ENCODE measurements at regions of chr10 and their contacts with region 1.

Region 1: DNA sequence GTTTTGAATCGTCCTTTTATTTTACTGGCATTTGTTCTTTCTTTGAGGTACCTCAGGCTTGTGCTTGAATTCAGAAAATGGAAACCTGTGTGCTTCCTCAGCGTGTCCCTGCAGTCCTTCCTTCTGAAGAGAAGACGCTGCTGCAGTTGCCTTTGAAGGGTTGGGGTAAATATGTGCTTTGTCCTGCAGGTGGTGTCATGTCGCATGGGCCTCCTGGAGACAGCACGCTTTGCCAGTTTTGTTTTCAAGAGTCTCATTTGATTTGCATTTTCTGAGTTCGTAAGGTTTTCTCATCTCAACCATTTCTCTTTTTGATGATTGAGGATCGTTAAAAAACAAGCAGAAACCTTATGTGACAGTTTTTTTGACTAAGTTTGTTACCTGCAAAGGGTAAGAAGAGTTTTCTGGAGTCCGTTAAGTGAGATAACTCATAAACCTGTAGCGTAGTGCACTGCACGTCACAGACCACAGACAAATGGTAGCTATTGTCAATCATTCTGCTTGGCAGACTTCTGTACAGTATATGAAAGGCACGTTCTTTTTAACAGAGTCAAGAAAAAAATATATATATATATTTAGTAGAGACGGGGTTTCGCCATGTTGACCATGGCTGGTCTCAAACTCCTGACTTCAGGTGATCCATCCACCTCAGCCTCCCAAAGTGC is 57.0 kb downstream of the CDC123 start:
- DNase-seq: peak; percentile 86
- ATAC-seq: peak; percentile 99
- H3K4me3 ChIP-seq: peak overlapping the region in 2 of 5 experiments; percentile 23 to 53
- H3K4me3 Mint-ChIP-seq: peak overlapping the region; percentile 83
- H3K27ac ChIP-seq: peak overlapping the region; percentile 57
- H3K27ac Mint-ChIP-seq: peak overlapping the region; percentile 93
- H3K4me1 ChIP-seq: peaks cover 14% of the 10 kb centered on the region in 2 donors
- H3K4me1 Mint-ChIP-seq: peaks cover 17% of the 10 kb centered on the region
- H3K27me3 ChIP-seq: no peaks in the 10 kb centered on the region
- H3K27me3 Mint-ChIP-seq: no peaks in the 10 kb centered on the region
- CTCF ChIP-seq: peak; percentile 82

Region 2: GRCh38 chr10:12241810-12242529 is 11.0 kb before region 1 on chr10:
- CTCF ChIA-PET with region 1: interaction called, 6 read pairs
- POLR2A ChIA-PET with region 1: no interaction called
- intact Hi-C with region 1: loop called (anchors 1 kb)
- DNase-seq: peak; percentile 71
- ATAC-seq: no peak
- H3K4me3 ChIP-seq: no peak overlapping the region
- H3K4me3 Mint-ChIP-seq: peak overlapping the region; percentile 77
- H3K27ac ChIP-seq: peak overlapping the region; percentile 95
- H3K27ac Mint-ChIP-seq: peak overlapping the region; percentile 99
- H3K4me1 ChIP-seq: peaks cover 58 to 62% of the 10 kb centered on the region in 2 donors
- H3K4me1 Mint-ChIP-seq: peaks cover 60% of the 10 kb centered on the region
- H3K27me3 ChIP-seq: no peaks in the 10 kb centered on the region
- H3K27me3 Mint-ChIP-seq: no peaks in the 10 kb centered on the region
- CTCF ChIP-seq: no peak

Region 3: DNA sequence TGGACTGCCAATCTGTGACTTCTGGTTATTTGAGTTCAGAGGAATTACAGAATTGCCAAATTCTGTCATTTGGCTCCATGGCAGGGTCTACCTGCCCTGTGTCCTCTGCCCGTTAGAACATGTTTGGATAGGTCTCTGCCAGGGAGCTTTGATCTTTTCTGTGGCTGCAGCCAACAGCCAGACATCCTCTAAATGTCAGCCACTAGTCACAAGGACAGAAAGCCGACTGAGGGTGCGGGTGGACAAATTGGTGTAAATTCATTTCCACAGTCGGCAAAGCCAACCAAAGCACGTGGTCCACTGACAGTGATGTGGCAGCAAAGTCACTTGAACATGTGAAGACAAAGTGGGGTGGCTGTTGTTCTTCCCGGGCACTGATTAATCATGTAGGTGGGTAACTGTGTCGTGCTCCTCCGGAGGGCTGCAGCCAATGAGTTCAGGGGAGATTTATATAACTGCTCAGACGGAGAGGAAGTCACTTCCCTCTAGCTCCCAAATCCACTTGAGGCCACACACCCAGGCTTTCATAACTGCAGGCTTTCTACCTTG is 69.6 kb after region 1 on chr10:
- CTCF ChIA-PET with region 1: interaction called, 11 read pairs
- POLR2A ChIA-PET with region 1: no interaction called
- intact Hi-C with region 1: no loop called
- DNase-seq: no peak
- ATAC-seq: no peak
- H3K4me3 ChIP-seq: no peak overlapping the region
- H3K4me3 Mint-ChIP-seq: no peak overlapping the region
- H3K27ac ChIP-seq: no peak overlapping the region
- H3K27ac Mint-ChIP-seq: no peak overlapping the region
- H3K4me1 ChIP-seq: peaks cover 4 to 15% of the 10 kb centered on the region in 2 donors
- H3K4me1 Mint-ChIP-seq: peaks cover 29% of the 10 kb centered on the region
- H3K27me3 ChIP-seq: no peaks in the 10 kb centered on the region
- H3K27me3 Mint-ChIP-seq: no peaks in the 10 kb centered on the region
- CTCF ChIP-seq: no peak

Region 4: GRCh38 chr10:12337453-12338372 is 84.7 kb after region 1 on chr10:
- CTCF ChIA-PET with region 1: no interaction called
- POLR2A ChIA-PET with region 1: no interaction called
- intact Hi-C with region 1: no loop called
- DNase-seq: no peak
- ATAC-seq: no peak
- H3K4me3 ChIP-seq: no peak overlapping the region
- H3K4me3 Mint-ChIP-seq: no peak overlapping the region
- H3K27ac ChIP-seq: no peak overlapping the region
- H3K27ac Mint-ChIP-seq: peak overlapping the region; percentile 15
- H3K4me1 ChIP-seq: peaks cover 52% of the 10 kb centered on the region in 2 donors
- H3K4me1 Mint-ChIP-seq: peaks cover 61% of the 10 kb centered on the region
- H3K27me3 ChIP-seq: no peaks in the 10 kb centered on the region
- H3K27me3 Mint-ChIP-seq: no peaks in the 10 kb centered on the region
- CTCF ChIP-seq: no peak

Region 5: DNA sequence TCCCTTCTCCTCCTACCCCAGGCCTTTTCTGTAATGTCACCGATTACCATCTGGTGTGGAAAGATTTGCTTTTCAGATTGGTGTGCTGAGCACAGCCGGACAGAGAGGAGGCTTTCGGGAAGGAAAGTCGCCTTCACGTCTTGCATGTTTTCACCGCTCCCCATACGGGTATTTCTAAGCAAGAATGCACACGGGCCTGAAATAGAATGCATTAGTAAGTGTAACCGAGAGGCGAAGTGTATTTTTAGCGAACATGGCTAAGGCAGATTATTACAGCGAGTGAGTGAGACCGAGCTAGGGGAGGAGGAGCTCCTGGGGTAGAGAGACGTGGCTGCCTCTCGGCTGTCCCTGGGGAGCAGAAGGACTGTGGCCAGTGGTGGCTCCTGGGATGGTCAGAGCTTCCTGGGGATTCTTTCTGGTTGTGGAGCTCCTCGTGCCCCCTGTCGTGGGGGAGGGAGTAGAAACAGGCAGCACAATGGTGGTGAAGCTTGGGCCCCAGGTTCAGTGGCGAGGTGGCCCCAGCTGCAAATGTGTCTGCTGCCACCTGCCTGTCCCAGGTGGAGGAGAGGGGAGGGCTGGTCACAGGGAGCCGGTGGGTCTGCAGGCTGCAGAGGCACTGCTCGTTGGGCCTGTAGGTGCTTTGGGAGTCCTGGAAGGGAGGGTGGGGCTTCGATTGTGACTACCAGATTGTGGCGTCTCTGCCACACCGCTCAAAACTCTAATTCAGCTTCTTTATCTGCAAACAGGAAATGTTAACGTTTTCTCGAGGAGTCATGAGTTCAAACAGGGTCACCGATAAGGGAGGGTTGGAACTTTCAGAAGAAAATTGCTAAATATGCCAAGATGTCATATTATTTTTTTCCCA is 232.2 kb after region 1 on chr10:
- CTCF ChIA-PET with region 1: interaction called, 9 read pairs
- POLR2A ChIA-PET with region 1: no interaction called
- intact Hi-C with region 1: loop called (anchors 1 kb)
- DNase-seq: peak; percentile 61
- ATAC-seq: peak; percentile 72
- H3K4me3 ChIP-seq: peak overlapping the region in 4 of 5 experiments; percentile 9 to 39 (median 17)
- H3K4me3 Mint-ChIP-seq: peak overlapping the region; percentile 88
- H3K27ac ChIP-seq: peak overlapping the region; percentile 54 to 61
- H3K27ac Mint-ChIP-seq: peak overlapping the region; percentile 92
- H3K4me1 ChIP-seq: peaks cover 28 to 38% of the 10 kb centered on the region in 2 donors
- H3K4me1 Mint-ChIP-seq: peaks cover 59% of the 10 kb centered on the region
- H3K27me3 ChIP-seq: no peaks in the 10 kb centered on the region
- H3K27me3 Mint-ChIP-seq: no peaks in the 10 kb centered on the region
- CTCF ChIP-seq: peak; percentile 32